ENCODE measurements at regions of chr3 and their contacts with region 1.

Region 1: DNA sequence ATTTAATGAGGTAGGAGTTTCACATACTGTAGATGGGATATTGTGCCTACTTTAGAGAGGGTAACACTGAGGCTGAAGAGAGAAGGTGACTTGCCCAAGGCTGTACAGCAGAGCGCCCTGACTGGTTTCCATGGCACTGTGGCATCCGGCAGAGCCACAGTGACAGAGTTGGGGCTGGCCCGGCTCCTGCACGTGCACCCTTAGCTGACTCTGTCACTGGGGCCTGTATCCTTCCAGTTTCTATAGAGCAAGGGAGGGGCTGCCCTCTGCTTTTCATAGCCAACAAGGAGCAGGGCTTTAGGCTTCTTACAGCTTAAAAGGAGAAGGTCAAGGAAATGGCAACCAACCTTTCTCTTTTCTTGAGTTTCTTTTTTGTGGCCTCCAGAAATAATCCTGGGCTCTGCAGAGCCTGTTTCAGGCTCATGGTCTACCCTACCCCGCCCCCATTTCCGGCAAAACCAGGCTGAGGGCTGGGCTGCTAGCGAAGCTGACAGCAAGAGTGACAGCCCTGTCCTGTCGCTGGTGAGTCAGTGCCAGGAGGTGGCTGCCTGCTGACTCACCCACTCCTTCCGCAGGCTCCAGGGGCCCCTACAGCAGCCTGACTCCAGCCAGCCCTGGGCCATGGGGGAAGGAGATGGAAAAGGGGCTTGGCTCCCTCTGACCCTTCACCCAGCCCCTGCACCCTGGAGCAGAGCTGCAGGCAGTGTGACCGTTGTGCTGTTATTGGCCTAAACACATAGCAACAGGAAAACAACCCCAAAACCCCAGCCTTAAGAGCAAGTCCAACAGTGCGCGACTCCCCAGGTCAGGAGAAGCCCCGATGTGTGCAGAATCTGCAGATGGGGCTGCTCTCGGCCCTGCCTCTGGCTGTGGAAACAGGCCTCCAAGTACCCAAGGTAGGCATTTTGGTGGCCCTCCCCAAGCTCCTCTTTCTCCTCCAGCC is 29.8 kb downstream of the SLC6A6 start:
- DNase-seq: peak; percentile 98
- H3K4me3 Mint-ChIP-seq: peak overlapping the region; percentile 80
- H3K27ac Mint-ChIP-seq: peak overlapping the region; percentile 97
- H3K4me1 Mint-ChIP-seq: peaks cover 73% of the 10 kb centered on the region
- H3K27me3 Mint-ChIP-seq: no peaks in the 10 kb centered on the region

Region 2: GRCh38 chr3:13895155-13896105 is 536.7 kb before region 1 on chr3:
- intact Hi-C with region 1: loop called (anchors 10 kb)
- DNase-seq: peak; percentile 99
- H3K4me3 Mint-ChIP-seq: peak overlapping the region; percentile 90
- H3K27ac Mint-ChIP-seq: peak overlapping the region; percentile 76
- H3K4me1 Mint-ChIP-seq: peaks cover 23% of the 10 kb centered on the region
- H3K27me3 Mint-ChIP-seq: peaks cover 2% of the 10 kb centered on the region

Region 3: DNA sequence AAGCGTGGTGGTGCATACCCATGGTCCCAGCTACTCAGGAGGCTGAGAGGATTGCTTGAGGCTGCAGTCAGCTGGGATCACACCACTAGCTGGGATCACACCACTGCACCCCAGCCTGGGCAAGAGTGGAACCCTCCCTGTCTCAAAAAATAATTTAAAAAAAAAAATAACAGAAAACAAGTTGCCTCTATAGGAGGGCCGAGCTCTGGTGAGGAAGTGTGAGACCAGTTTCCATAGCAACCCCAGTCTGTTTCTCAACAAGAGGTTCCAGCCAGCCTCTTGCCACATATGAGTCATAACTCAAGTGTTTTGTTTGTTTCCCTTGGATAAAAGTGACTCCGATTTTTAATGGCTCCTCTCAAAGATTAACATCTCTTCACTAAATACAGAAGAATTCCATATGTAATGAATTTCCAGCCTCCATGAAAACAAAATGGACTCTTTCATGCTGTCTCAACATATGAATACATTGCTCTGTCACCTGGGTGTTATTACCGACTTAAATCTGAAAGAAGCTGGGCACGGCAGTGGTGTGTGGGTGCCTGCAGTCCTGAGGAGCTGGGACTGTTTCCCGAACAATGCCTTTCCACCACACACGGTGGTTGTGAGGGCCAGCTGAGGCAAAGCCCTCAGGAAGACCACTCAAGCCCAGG is 287.6 kb before region 1 on chr3:
- intact Hi-C with region 1: loop called (anchors 5 kb)
- DNase-seq: peak; percentile 93
- H3K4me3 Mint-ChIP-seq: peak overlapping the region; percentile 78
- H3K27ac Mint-ChIP-seq: peak overlapping the region; percentile 94
- H3K4me1 Mint-ChIP-seq: peaks cover 30% of the 10 kb centered on the region
- H3K27me3 Mint-ChIP-seq: no peaks in the 10 kb centered on the region

Region 4: DNA sequence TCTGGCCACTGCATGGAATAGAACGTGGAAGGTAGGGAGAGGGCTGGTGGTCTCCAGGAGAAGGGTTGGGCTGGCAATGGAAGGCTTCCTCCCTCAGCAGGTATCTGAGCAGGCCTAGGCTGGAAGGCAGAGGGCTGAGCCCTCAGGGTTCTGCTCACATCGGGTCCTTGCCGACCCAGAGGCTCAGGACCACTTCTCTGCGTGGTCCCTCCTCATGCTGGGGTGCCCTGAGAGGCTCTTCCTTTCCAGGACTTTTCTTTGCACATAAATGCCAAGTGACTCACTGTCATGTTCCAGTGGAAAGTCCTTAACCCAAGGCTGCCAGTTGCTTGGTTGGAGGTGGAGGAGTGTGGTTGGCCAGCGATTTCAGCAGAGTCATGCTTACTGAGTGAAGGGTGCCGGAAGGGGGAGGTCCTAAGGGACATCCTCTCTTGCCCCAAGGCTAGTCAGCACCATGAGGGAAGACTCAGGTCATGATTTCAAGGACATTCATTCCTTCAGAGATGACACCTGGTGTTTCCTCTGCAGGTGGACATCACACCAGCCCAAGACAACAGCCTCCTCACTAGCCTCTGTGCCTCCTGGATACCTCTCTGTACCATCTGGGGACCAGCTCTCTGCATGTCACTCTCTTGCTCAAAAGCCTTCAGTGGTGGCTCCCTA is 21.5 kb before region 1 on chr3:
- intact Hi-C with region 1: loop called (anchors 1 kb)
- DNase-seq: peak; percentile 78
- H3K4me3 Mint-ChIP-seq: peak overlapping the region; percentile 59
- H3K27ac Mint-ChIP-seq: peak overlapping the region; percentile 90
- H3K4me1 Mint-ChIP-seq: peaks cover 44% of the 10 kb centered on the region
- H3K27me3 Mint-ChIP-seq: no peaks in the 10 kb centered on the region

Region 5: GRCh38 chr3:14651440-14652251 is 219.5 kb after region 1 on chr3 and contains the start of gene CCDC174:
- intact Hi-C with region 1: loop called (anchors 1 kb)
- DNase-seq: peak; percentile 99
- H3K4me3 Mint-ChIP-seq: peak within 1 kb of the TSS; percentile 100
- H3K27ac Mint-ChIP-seq: peak within 1 kb of the TSS; percentile 95
- H3K4me1 Mint-ChIP-seq: peaks cover 38% of the 10 kb centered on the region
- H3K27me3 Mint-ChIP-seq: peaks cover 3% of the 10 kb centered on the region
- total RNA-seq, gene CCDC174: 16.0 and 16.8 TPM in 2 replicates

Measured in activated CD4-positive, alpha-beta T cell treated with anti-CD3 and anti-CD28 coated beads, Interleukin-2, amount 10 ng/mL, durations not matched to agents 24 days and 14 days (primary cell).